ENCODE measurements at regions of chr2 and their contacts with region 1.

Region 1: GRCh38 chr2:45935791-45936622 is 284.5 kb downstream of the PRKCE start:
- DNase-seq: peak; percentile 94
- ATAC-seq: peak; percentile 89

Region 2: DNA sequence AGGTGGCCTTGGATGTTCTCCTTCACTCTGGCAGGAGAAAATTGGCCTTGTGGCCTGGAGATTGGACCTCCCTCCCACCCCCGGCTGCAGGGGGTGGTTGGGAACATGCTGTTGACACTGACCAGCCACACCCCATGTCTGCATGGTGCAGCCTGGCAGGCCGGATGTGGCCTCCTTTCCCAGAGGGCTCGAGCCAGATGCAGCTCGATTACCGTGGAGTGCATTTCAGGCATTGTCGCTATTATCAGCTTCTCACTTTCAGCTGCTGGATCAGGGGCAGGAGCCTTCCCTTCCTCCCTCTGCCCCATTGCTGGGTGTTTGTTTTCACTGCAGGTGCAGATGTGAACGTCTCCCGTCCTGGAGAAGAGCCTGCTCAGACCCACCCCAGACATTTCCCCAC is 715.8 kb before region 1 on chr2:
- intact Hi-C with region 1: no loop called
- DNase-seq: no peak
- ATAC-seq: no peak

Region 3: DNA sequence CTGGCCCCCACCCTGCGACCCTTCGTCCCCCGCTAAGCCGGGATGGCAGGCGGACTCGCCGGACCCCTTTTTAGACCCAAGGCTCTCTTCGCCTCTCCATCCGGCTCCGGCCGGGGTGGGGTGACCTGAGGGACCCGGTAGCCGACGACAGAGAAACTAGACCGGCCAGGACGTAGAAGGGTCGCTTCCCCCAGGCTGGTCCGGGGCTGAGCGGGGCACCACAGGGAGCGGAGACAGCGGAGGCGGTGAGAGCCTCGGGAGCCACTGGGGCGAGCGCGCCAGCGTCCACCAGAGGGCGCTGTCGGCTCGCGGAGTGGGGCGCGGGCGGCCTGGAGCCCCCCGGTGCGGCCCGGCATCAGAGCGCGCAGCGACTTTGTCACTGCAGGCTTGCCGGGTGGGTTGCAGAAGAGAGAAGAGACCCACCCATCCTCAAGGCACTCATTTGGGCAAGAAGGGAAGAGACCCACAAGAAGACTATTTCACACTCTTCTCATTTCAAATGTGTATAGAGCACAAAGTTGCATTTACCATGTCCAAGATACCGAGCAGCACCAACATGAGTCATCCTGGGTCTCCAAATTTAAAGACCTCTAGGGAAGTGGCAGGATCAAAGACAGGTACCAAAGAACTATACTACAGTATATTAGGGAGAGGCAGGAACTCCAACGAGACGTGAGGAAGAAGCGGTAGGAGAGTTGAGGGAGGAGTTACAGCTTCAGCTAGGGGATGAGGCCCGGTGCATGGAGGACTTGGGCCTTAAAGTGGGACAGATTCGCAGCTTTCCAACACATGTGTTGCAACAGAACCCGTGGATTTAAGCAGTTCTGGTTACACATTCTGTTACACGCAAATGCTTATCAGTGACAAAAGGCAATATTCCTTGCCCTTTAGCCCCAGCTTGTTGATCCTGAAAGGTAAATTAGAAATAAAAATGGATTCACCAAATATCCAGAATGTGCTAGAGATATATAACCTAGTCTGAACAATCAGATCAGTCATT is 292.2 kb before region 1 on chr2:
- intact Hi-C with region 1: loop called (anchors 2 kb)
- DNase-seq: peak; percentile 88
- ATAC-seq: peak; percentile 95

Region 4: DNA sequence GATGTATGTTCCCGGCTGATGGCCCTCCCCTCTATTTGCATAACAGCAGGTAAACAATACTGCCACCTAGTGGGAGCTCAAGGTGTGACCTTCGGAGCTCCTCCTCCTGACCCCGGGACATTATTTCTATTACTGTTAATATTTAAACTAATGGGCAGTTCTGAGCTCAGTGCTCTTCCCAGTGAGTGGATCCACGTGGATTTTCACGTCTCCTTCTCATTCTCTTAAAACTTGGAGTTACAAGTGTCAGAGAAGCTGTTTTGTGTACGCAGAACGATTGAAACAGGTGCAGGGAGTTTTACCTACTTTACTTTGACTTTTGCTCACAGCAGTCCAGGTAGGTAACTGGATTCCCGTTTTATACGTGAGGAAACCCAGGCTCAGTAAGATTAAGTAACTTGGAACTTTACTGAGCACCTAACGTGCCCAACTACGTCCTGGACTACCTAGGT is 157.3 kb before region 1 on chr2:
- intact Hi-C with region 1: loop called (anchors 2 kb)
- DNase-seq: no peak
- ATAC-seq: peak; percentile 66

Region 5: GRCh38 chr2:45889053-45889452 is 47.0 kb before region 1 on chr2:
- intact Hi-C with region 1: loop called (anchors 5 kb)
- DNase-seq: no peak
- ATAC-seq: peak; percentile 54

Region 6: DNA sequence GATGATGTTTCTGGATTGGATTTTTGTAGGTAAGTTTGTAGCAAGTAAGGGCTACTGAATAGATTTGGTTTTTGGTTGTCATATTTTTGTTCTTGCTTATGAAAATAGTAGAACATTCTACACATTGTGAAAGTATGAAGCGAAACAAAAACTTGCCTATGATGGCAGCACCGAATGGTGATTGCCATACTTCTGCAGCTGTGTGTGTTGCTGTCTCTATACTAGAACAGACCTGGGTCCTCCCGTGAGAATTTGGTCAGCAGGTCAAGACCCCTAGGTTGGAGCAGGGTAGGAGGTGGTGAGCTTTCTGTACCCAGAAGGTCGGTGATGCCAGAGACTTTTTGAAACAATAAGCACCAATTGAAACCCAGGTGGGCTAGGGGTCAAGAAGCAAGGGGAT is 38.0 kb after region 1 on chr2:
- intact Hi-C with region 1: no loop called
- DNase-seq: no peak
- ATAC-seq: no peak